Psoas muscle (tissue), 8 donors: ENCODE measurements at regions of chr6 and their contacts with region 1.

Region 1: DNA sequence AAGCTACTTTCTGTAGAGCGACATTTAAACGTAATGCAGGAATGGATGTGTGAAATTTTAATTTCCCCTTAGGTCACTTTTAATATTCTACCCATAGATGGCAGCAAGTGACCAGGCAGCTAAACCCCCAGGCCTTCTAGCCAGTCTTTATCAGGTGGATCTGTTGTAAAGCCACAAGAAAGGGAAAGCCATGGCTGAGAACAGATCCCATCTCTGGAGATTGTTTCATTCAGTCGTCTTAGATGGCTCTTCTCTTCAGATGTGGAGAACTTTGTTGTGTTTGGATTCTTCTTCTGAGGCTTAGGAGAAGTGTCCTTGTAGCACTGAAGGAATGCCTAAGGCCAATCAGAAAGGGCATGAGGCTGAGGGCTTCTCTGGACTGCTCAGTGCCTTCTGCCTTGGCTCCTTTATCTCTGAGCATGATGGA is 15.8 kb upstream of the RNF182 start:
- DNase-seq: no peak
- ATAC-seq: peak; percentile 61 to 85 (median 65)
- H3K4me3 ChIP-seq: no peak overlapping the region
- H3K27ac ChIP-seq: no peak overlapping the region
- H3K4me1 ChIP-seq: no peaks in the 10 kb centered on the region
- H3K27me3 ChIP-seq: peaks cover 0 to 4% (median 0%) of the 10 kb centered on the region in 3 donors
- CTCF ChIP-seq: peak; percentile 86

Region 2: GRCh38 chr6:14046476-14047068 is 137.6 kb after region 1 on chr6:
- intact Hi-C with region 1: loop called in 1 of 2 experiments (anchors 5 kb)
- DNase-seq: no peak
- ATAC-seq: peak in 1 of 4 donors; percentile 63
- H3K4me3 ChIP-seq: no peak overlapping the region
- H3K27ac ChIP-seq: no peak overlapping the region
- H3K4me1 ChIP-seq: no peaks in the 10 kb centered on the region
- H3K27me3 ChIP-seq: peaks cover 0 to 18% (median 0%) of the 10 kb centered on the region in 3 donors
- CTCF ChIP-seq: peak; percentile 43

Region 3: GRCh38 chr6:14066782-14067406 is 157.9 kb after region 1 on chr6:
- intact Hi-C with region 1: loop called (anchors 2 to 5 kb)
- DNase-seq: no peak
- ATAC-seq: peak; percentile 67 to 84 (median 78)
- H3K4me3 ChIP-seq: no peak overlapping the region
- H3K27ac ChIP-seq: no peak overlapping the region
- H3K4me1 ChIP-seq: no peaks in the 10 kb centered on the region
- H3K27me3 ChIP-seq: peaks cover 0 to 4% (median 4%) of the 10 kb centered on the region in 3 donors
- CTCF ChIP-seq: peak; percentile 70

Region 4: GRCh38 chr6:14144678-14145113 is 235.7 kb after region 1 on chr6:
- intact Hi-C with region 1: loop called (anchors 2 kb)
- DNase-seq: peak; percentile 50 to 81
- ATAC-seq: peak; percentile 76 to 91 (median 86)
- H3K4me3 ChIP-seq: no peak overlapping the region
- H3K27ac ChIP-seq: no peak overlapping the region
- H3K4me1 ChIP-seq: peaks cover 12% of the 10 kb centered on the region
- H3K27me3 ChIP-seq: peaks cover 0 to 6% (median 1%) of the 10 kb centered on the region in 3 donors
- CTCF ChIP-seq: peak; percentile 87